ENCODE measurements at regions of chr11 and their contacts with region 1.

Region 1: GRCh38 chr11:33829433-33830141 is 55.3 kb upstream of the FBXO3 start:
- DNase-seq: no peak
- H3K4me3 Mint-ChIP-seq: peak overlapping the region; percentile 71
- H3K27ac Mint-ChIP-seq: no peak overlapping the region
- H3K4me1 Mint-ChIP-seq: peaks cover 3% of the 10 kb centered on the region
- H3K27me3 Mint-ChIP-seq: peaks cover 53% of the 10 kb centered on the region

Region 2: GRCh38 chr11:33362051-33362910 is 467.3 kb before region 1 on chr11:
- intact Hi-C with region 1: loop called (anchors 1 kb)
- DNase-seq: no peak
- H3K4me3 Mint-ChIP-seq: no peak overlapping the region
- H3K27ac Mint-ChIP-seq: no peak overlapping the region
- H3K4me1 Mint-ChIP-seq: peaks cover 2% of the 10 kb centered on the region
- H3K27me3 Mint-ChIP-seq: peaks cover 21% of the 10 kb centered on the region

Region 3: DNA sequence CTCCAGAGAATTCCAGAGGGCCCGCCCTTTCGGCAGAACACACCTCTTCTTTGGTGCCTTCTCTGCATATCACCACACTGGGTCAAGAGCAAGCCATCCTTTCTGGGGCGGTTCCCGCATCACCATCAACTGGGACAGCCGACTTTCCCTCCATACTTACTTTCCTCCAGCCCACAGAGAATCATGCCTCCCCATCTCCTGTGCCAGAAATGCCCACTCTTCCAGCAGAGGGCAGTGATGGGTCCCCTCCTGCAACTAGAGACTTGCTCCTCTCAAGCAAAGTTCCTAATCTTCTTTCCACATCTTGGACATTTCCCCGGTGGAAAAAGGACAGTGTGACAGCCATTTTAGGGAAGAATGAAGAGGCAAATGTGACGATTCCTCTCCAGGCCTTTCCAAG is 286.7 kb before region 1 on chr11:
- intact Hi-C with region 1: loop called (anchors 5 kb)
- DNase-seq: no peak
- H3K4me3 Mint-ChIP-seq: no peak overlapping the region
- H3K27ac Mint-ChIP-seq: no peak overlapping the region
- H3K4me1 Mint-ChIP-seq: no peaks in the 10 kb centered on the region
- H3K27me3 Mint-ChIP-seq: peaks cover 6% of the 10 kb centered on the region

Region 4: DNA sequence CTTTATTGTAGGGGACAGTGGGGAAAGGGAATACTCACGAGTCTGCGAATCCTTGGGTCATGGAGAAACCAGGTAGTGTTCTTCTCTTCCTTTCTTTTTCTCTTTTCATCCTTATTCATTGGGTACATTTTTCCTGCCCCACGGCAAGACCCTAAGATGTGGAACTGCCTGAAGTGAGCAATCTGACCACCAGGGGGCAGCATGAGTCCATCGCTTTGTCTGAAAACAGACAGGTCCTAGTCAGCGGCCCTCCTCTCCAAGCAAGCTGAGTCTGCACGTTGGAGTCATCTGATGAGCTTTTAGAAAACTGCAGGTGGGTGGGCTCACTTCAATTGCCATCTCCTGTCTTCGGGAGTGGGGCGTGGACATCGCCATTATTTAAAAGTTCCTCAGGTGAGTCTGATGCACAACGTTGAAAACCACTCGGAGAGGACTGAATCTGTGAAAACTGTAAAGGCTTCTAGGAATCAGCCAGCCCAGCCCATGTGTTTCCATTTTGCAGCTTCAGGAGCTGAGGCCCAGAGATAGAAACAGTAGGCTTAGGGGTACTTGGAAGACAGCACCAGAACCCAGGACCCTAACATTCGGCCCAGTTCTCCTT is 21.3 kb before region 1 on chr11:
- intact Hi-C with region 1: loop called (anchors 1 kb)
- DNase-seq: peak; percentile 64
- H3K4me3 Mint-ChIP-seq: no peak overlapping the region
- H3K27ac Mint-ChIP-seq: no peak overlapping the region
- H3K4me1 Mint-ChIP-seq: no peaks in the 10 kb centered on the region
- H3K27me3 Mint-ChIP-seq: peaks cover 35% of the 10 kb centered on the region

Region 5: DNA sequence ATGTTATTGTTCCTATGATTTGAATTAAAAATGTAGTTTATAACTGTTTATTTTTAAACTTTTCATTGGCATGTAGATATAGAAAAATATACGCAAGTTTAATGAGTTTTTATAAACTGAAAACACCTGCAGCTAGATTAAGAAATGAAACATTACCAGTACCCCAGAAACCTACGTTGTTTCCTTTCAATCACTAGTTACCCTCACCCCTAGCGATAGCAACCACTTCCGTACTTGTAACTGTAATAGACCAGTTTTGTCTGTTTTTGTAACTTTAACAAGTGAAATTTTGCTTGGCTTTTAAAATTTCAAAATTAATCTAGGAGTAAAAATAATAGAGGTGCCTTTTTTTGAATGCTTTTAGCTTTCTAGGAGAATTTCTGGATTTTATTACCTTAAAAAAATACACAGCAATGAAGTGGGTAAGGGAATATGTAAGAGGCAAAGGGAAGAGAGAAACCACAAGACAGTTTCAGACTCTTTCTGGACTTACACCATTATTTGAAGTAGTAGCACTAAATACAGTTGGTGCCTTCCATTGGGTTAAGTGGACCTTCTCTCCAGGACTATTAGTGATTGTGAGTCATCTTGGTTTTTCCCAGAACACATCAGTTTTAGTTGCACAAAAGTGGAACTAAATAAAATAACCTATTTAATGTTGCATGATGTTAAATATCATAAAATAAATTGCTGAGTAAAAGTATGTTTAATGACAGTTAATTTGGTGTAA is 257.1 kb after region 1 on chr11:
- intact Hi-C with region 1: no loop called
- DNase-seq: no peak
- H3K4me3 Mint-ChIP-seq: no peak overlapping the region
- H3K27ac Mint-ChIP-seq: peak overlapping the region; percentile 49
- H3K4me1 Mint-ChIP-seq: peaks cover 21% of the 10 kb centered on the region
- H3K27me3 Mint-ChIP-seq: no peaks in the 10 kb centered on the region